ENCODE measurements at regions of chr3 and their contacts with region 1.

Region 1: DNA sequence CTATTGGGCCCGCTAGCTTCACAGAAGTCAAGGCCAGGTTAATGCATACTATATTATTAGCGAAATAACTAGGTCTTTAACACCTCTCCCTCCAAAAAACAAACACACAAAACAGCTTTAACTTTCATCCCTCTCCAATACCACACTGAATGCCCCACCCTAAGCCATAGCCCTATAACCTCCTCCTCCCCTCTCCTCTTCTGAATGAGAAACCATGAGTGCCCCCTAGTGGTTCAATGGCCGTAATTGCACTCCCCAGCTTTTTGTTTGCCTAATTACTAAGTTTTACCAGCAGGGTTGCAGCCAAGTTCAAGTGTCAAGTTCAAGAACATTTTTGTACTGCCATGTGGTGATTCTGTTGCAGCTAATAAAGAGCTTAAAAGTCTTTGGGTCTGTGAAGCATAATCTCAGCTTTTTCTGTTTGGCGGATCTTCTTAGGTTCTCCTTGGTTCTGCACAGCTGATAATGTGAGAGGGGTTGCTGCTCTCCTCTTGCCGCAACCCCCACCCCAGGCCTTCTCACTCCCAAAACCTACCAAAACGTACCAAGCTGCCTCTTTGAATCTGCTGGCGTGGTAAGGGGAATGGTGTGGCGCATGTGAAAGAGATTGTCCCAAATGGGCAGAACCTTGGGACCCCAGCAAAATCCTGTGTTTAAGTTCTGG is 57.9 kb downstream of the RPL22L1 start:
- DNase-seq: peak; percentile 77
- H3K4me3 ChIP-seq: no peak overlapping the region; a peak in 1 of 4 replicates
- H3K27ac ChIP-seq: peak overlapping the region in 1 of 2 experiments; percentile 19; a peak in 2 of 4 replicates
- H3K4me1 ChIP-seq: peaks cover 11 to 13% of the 10 kb centered on the region in 2 experiments
- H3K27me3 ChIP-seq: no peaks in the 10 kb centered on the region
- CTCF ChIP-seq: peak; percentile 96
- EP300 ChIP-seq: no peak
- RAD21 ChIP-seq: peak; percentile 96

Region 2: DNA sequence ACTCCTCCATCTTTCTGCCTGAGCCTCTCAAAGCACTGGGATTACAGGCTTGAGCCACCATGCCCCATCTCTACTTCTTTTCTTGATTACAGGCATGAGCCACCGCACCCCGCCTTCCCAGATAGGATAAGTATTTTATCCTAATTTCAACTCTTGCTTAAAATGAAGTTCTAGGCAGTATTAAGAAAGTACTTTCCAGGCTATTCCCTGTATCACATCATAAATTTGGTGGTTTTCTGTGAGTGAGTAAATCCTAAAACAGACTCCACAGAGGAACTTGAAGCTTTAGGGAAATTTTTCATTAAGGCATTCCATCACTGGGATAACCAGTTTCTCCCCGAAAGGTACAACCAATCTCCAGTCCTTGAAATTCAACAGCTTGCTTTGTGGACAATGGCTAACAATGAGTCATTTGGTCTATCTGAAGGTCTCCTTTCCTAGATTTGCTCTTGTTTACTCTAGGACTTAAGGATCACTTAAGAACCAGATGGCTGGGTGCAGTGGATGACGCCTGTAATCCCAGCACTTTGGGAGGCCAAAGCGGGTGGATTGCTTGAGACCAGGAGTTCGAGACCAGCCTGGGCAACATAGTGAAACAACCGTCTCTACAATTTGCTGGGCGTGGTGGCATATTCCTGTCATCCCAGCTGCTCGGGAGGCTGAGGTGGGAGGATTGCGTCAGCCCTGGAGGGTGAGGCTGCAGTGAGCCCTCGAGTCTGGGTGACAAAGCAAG is 504.2 kb before region 1 on chr3:
- CTCF ChIA-PET with region 1: interaction called, 12 read pairs
- POLR2A ChIA-PET with region 1: no interaction called
- DNase-seq: no peak
- H3K4me3 ChIP-seq: no peak overlapping the region
- H3K27ac ChIP-seq: no peak overlapping the region
- H3K4me1 ChIP-seq: no peaks in the 10 kb centered on the region; a peak in 1 of 4 replicates
- H3K27me3 ChIP-seq: no peaks in the 10 kb centered on the region
- CTCF ChIP-seq: no peak
- EP300 ChIP-seq: no peak
- RAD21 ChIP-seq: no peak

Region 3: GRCh38 chr3:170414202-170414663 is 397.8 kb before region 1 on chr3:
- CTCF ChIA-PET with region 1: interaction called, 316 read pairs
- POLR2A ChIA-PET with region 1: no interaction called
- DNase-seq: peak; percentile 71
- H3K4me3 ChIP-seq: peak overlapping the region in 1 of 2 experiments; percentile 18; a peak in 1 of 4 replicates
- H3K27ac ChIP-seq: peak overlapping the region in 1 of 2 experiments; percentile 22; a peak in 2 of 4 replicates
- H3K4me1 ChIP-seq: peaks cover 0 to 6% of the 10 kb centered on the region in 2 experiments; a peak in 1 of 4 replicates
- H3K27me3 ChIP-seq: no peaks in the 10 kb centered on the region
- CTCF ChIP-seq: peak; percentile 99
- EP300 ChIP-seq: peak in 1 of 2 experiments; percentile 28; a peak in 1 of 4 replicates
- RAD21 ChIP-seq: peak; percentile 100

Region 4: GRCh38 chr3:170553788-170554757 is 258.0 kb before region 1 on chr3:
- CTCF ChIA-PET with region 1: interaction called, 23 read pairs
- POLR2A ChIA-PET with region 1: no interaction called
- DNase-seq: no peak
- H3K4me3 ChIP-seq: no peak overlapping the region
- H3K27ac ChIP-seq: no peak overlapping the region
- H3K4me1 ChIP-seq: no peaks in the 10 kb centered on the region; a peak in 2 of 4 replicates
- H3K27me3 ChIP-seq: no peaks in the 10 kb centered on the region
- CTCF ChIP-seq: peak; percentile 27
- EP300 ChIP-seq: no peak
- RAD21 ChIP-seq: peak; percentile 38; the same call in 1 of the 2 replicates

Region 5: GRCh38 chr3:170689893-170690660 is 122.0 kb before region 1 on chr3:
- CTCF ChIA-PET with region 1: interaction called, 19 read pairs
- POLR2A ChIA-PET with region 1: no interaction called
- DNase-seq: peak; percentile 72
- H3K4me3 ChIP-seq: no peak overlapping the region; a peak in 1 of 4 replicates
- H3K27ac ChIP-seq: peak overlapping the region; percentile 48 to 78
- H3K4me1 ChIP-seq: peaks cover 3 to 19% of the 10 kb centered on the region in 2 experiments; a peak in 3 of 4 replicates
- H3K27me3 ChIP-seq: no peaks in the 10 kb centered on the region
- CTCF ChIP-seq: peak; percentile 64
- EP300 ChIP-seq: no peak
- RAD21 ChIP-seq: peak; percentile 90

Region 6: DNA sequence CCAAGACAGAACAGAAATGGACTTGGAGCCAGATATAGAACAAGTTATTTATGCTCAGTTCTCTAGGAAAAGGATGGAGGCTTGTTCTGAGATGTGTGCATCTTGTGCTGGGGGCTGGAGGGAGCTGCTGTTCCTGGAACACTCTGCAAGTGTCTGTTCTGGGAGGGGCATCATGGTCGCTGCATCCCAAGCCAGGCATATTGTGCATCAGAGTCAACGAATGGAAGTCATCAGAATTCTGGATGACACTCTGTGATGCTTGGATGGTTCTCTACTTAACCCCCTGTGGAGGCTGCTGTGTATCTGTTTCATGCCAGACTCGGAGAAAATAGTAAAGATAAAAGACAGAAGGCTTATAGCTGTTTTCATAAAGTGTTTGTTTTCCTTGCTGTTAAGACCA is 23.3 kb after region 1 on chr3:
- CTCF ChIA-PET with region 1: interaction called, 25 read pairs
- POLR2A ChIA-PET with region 1: no interaction called
- DNase-seq: peak; percentile 61
- H3K4me3 ChIP-seq: no peak overlapping the region
- H3K27ac ChIP-seq: no peak overlapping the region
- H3K4me1 ChIP-seq: peaks cover 0 to 3% of the 10 kb centered on the region in 2 experiments; a peak in 2 of 4 replicates
- H3K27me3 ChIP-seq: no peaks in the 10 kb centered on the region
- CTCF ChIP-seq: no peak
- EP300 ChIP-seq: no peak
- RAD21 ChIP-seq: no peak

Region 7: DNA sequence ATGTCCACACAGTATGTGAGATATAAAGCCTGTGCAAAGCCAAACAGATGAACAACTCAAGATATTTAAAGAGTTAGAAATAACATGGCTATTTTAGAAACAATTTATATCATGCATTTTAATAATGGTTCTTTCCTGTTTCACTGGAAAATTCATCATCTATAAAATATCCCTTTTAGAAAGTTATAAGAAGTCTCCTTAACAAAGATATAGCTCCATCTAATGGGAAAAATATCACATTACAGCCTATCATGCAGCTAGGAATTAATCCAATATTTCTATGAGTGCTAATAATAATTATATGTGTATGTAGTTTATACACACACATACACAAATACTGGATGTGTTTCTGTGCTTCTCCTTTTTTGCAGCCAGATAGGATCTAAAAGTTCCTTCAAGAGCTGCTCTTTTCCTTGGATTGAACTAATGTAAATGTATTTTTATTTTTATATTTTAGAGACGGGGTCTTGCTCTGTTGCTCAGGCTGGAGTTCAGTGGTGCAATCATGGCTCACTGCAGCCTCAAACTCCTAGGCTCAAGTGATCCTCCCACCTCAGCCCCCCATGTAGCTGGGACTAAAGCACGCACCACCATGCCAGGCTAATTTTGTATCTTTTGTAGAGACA is 36.3 kb after region 1 on chr3:
- CTCF ChIA-PET with region 1: interaction called, 27 read pairs
- POLR2A ChIA-PET with region 1: no interaction called
- DNase-seq: peak; percentile 7
- H3K4me3 ChIP-seq: no peak overlapping the region
- H3K27ac ChIP-seq: no peak overlapping the region
- H3K4me1 ChIP-seq: no peaks in the 10 kb centered on the region
- H3K27me3 ChIP-seq: no peaks in the 10 kb centered on the region
- CTCF ChIP-seq: peak; percentile 73
- EP300 ChIP-seq: no peak
- RAD21 ChIP-seq: peak; percentile 62

Measured in SK-N-SH (cell line).